Activated B cell treated with CpG ODN at 0.5 μM for 24 hours (primary cell): ENCODE measurements at regions of chr16 and their contacts with region 1.

Region 1: DNA sequence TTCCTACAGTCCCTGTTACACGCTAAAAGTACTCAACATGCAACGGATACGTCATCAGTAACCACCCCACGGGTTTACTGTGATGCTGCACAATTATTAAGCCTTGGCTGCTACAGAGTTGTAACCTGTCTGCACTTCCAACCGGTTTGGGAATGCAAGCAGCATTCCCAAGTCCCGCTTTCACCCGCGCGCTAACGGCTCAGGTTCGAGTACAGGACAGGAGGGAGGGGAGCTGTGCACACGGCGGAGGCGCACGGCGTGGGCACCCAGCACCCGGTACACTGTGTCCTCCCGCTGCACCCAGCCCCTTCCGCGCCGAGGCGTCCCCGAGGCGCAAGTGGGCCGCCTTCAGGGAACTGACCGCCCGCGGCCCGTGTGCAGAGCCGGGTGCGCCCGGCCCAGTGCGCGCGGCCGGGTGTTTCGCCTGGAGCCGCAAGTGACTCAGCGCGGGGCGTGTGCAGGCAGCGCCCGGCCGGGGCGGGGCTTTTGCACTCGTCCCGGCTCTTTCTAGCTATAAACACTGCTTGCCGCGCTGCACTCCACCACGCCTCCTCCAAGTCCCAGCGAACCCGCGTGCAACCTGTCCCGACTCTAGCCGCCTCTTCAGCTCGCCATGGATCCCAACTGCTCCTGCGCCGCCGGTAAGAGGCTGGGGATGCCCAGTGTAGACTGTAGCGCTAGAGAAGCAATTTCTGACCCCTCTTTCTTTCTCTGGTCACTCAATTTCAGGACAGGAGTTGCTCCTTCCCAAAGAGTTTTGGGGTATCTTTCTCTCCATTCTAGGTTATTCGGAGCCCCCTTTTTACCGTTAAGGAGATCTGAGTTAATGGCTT is at the start of gene MT2A:
- DNase-seq: peak; percentile 82
- ATAC-seq: peak; percentile 85
- H3K4me3 Mint-ChIP-seq: peak within 1 kb of the TSS; percentile 93
- H3K27ac Mint-ChIP-seq: peak within 1 kb of the TSS; percentile 87
- H3K4me1 Mint-ChIP-seq: peaks cover 36% of the 10 kb centered on the region
- H3K27me3 Mint-ChIP-seq: no peaks in the 10 kb centered on the region
- CTCF ChIP-seq: no peak
- total RNA-seq, gene MT2A: 72.7 and 77.4 TPM in 2 replicates

Region 2: GRCh38 chr16:56281256-56281805 is 326.9 kb before region 1 on chr16:
- CTCF ChIA-PET with region 1: no interaction called
- POLR2A ChIA-PET with region 1: no interaction called
- intact Hi-C with region 1: no loop called
- DNase-seq: no peak
- ATAC-seq: no peak
- H3K4me3 Mint-ChIP-seq: no peak overlapping the region
- H3K27ac Mint-ChIP-seq: no peak overlapping the region
- H3K4me1 Mint-ChIP-seq: peaks cover 30% of the 10 kb centered on the region
- H3K27me3 Mint-ChIP-seq: no peaks in the 10 kb centered on the region
- CTCF ChIP-seq: no peak

Region 3: GRCh38 chr16:56491657-56492261 is 116.5 kb before region 1 on chr16:
- CTCF ChIA-PET with region 1: no interaction called
- POLR2A ChIA-PET with region 1: interaction called, 10 read pairs
- intact Hi-C with region 1: no loop called
- DNase-seq: no peak
- ATAC-seq: no peak
- H3K4me3 Mint-ChIP-seq: no peak overlapping the region
- H3K27ac Mint-ChIP-seq: no peak overlapping the region
- H3K4me1 Mint-ChIP-seq: peaks cover 9% of the 10 kb centered on the region
- H3K27me3 Mint-ChIP-seq: no peaks in the 10 kb centered on the region
- CTCF ChIP-seq: no peak

Region 4: GRCh38 chr16:56625140-56625942 is 17.1 kb after region 1 on chr16 and contains the start of gene MT1E:
- CTCF ChIA-PET with region 1: interaction called, 4 read pairs
- POLR2A ChIA-PET with region 1: interaction called, 7 read pairs
- intact Hi-C with region 1: loop called (anchors 1 kb)
- DNase-seq: no peak
- ATAC-seq: peak; percentile 38
- H3K4me3 Mint-ChIP-seq: peak within 1 kb of the TSS; percentile 81
- H3K27ac Mint-ChIP-seq: no peak within 1 kb of the TSS
- H3K4me1 Mint-ChIP-seq: peaks cover 29% of the 10 kb centered on the region
- H3K27me3 Mint-ChIP-seq: peaks cover 31% of the 10 kb centered on the region
- CTCF ChIP-seq: no peak
- total RNA-seq, gene MT1E: 2.8 and 4.2 TPM in 2 replicates

Region 5: DNA sequence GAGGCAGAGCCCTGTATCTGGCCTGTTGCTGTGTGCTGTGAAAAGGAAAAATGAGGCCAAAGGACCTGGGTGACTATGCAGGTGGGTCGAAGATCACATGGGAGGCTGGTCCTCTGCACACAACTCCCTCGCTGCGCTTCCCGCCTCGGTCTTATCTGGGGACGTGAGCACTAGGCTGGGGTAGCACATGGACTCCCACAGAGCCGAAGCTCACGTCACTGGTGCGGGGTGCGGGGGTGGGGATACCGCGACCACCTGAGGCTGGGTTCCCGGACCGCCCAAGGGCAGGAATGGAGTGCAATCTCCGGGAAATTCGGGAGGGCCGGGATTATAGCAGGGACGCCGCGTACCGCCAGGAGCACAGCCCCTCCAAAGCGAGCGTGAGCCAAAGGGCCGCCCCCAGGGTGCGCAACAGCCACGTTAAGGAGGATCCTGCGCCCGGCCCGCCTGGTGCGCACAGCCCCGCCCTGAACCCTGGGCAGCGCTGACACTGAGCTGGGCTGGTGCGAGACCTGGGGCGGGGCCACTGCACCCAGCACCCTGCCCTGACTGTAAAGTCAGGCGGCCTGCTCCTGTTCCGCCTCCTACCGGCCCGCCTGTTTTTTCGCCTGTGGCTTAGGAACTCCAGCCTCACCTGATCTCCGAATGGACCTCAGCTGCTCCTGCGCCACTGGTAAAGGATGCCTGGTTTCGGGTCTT is 35.0 kb after region 1 on chr16:
- CTCF ChIA-PET with region 1: interaction called, 4 read pairs
- POLR2A ChIA-PET with region 1: no interaction called
- intact Hi-C with region 1: loop called (anchors 1 kb)
- DNase-seq: peak; percentile 42
- ATAC-seq: peak; percentile 99
- H3K4me3 Mint-ChIP-seq: peak overlapping the region; percentile 59
- H3K27ac Mint-ChIP-seq: no peak overlapping the region
- H3K4me1 Mint-ChIP-seq: peaks cover 18% of the 10 kb centered on the region
- H3K27me3 Mint-ChIP-seq: peaks cover 64% of the 10 kb centered on the region
- CTCF ChIP-seq: no peak

Region 6: GRCh38 chr16:56681939-56682702 is 73.9 kb after region 1 on chr16 and contains the start of gene MT1X:
- CTCF ChIA-PET with region 1: no interaction called
- POLR2A ChIA-PET with region 1: interaction called, 9 read pairs
- intact Hi-C with region 1: loop called (anchors 1 kb)
- DNase-seq: peak; percentile 85
- ATAC-seq: peak; percentile 98
- H3K4me3 Mint-ChIP-seq: peak within 1 kb of the TSS; percentile 93
- H3K27ac Mint-ChIP-seq: peak within 1 kb of the TSS; percentile 84
- H3K4me1 Mint-ChIP-seq: peaks cover 11% of the 10 kb centered on the region
- H3K27me3 Mint-ChIP-seq: peaks cover 3% of the 10 kb centered on the region
- CTCF ChIP-seq: no peak
- total RNA-seq, gene MT1X: 36.3 and 48.9 TPM in 2 replicates

Region 7: DNA sequence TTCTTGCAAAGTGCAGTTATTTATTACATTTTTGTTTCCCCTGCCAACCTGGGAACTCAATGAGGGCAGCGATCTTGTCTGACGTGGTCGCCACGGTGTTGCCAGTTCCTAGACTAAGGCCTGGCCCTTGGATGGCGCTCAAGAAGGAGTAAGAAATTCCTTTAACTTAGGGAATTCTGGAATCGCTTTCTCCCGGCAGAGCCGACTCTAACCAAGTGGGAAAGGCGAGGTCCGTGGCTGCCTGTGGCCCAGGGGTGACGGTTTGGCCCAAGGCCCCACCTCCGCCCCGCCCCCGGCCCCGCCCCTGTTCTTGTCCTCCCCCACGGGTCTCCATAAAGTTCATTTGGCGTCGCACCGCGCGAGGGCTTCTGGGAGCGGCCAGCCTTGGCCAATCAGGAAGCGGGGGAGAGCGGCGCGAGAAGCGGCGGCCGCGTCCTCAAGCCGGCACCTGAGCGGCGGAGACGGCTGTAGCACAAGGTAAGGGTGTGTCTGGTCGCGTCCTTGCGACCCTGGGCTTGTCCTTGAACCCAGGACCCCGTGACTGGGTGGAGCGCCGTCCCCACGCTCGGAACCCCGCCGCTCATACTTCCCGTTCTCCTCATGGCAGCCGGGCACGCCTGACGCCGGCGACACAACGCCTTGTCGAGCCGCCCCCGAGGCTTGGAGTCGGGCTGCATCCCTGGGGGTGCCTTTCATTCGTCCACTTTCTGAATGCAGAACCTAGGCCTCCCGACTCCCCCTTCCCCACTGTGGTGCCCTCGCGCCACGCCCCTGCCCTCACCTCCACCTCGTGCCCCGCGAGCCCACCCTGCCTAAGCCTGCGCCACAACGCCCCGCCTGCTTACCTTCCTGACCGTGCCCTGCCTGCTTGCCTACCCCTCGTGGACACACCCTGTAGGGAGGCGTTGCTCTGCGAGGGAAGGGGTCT is 121.7 kb after region 1 on chr16 and contains the start of gene NUP93:
- CTCF ChIA-PET with region 1: no interaction called
- POLR2A ChIA-PET with region 1: no interaction called
- intact Hi-C with region 1: loop called (anchors 1 kb)
- DNase-seq: peak; percentile 79
- ATAC-seq: peak; percentile 89
- H3K4me3 Mint-ChIP-seq: peak within 1 kb of the TSS; percentile 90
- H3K27ac Mint-ChIP-seq: peak within 1 kb of the TSS; percentile 84
- H3K4me1 Mint-ChIP-seq: peaks cover 20% of the 10 kb centered on the region
- H3K27me3 Mint-ChIP-seq: no peaks in the 10 kb centered on the region
- CTCF ChIP-seq: no peak
- total RNA-seq, gene NUP93: 104 and 111 TPM in 2 replicates

Region 8: GRCh38 chr16:58129097-58129936 is 1521.1 kb after region 1 on chr16 and contains the start of gene CFAP20:
- CTCF ChIA-PET with region 1: no interaction called
- POLR2A ChIA-PET with region 1: no interaction called
- intact Hi-C with region 1: loop called (anchors 5 kb)
- DNase-seq: peak; percentile 90
- ATAC-seq: peak; percentile 91
- H3K4me3 Mint-ChIP-seq: peak within 1 kb of the TSS; percentile 89
- H3K27ac Mint-ChIP-seq: peak within 1 kb of the TSS; percentile 85
- H3K4me1 Mint-ChIP-seq: peaks cover 48% of the 10 kb centered on the region
- H3K27me3 Mint-ChIP-seq: no peaks in the 10 kb centered on the region
- CTCF ChIP-seq: no peak
- total RNA-seq, gene CFAP20: 20.2 and 24.9 TPM in 2 replicates